ENCODE measurements at regions of chr3 and their contacts with region 1.

Region 1: GRCh38 chr3:32510075-32510724 is 7.5 kb upstream of the CMTM6 start:
- DNase-seq: peak in 4 of 5 donors; percentile 80 to 91 (median 84)
- H3K4me3 ChIP-seq: no peak overlapping the region
- H3K27ac ChIP-seq: no peak overlapping the region
- H3K4me1 ChIP-seq: no peaks in the 10 kb centered on the region
- H3K27me3 ChIP-seq: no peaks in the 10 kb centered on the region
- CTCF ChIP-seq: peak; percentile 89

Region 2: DNA sequence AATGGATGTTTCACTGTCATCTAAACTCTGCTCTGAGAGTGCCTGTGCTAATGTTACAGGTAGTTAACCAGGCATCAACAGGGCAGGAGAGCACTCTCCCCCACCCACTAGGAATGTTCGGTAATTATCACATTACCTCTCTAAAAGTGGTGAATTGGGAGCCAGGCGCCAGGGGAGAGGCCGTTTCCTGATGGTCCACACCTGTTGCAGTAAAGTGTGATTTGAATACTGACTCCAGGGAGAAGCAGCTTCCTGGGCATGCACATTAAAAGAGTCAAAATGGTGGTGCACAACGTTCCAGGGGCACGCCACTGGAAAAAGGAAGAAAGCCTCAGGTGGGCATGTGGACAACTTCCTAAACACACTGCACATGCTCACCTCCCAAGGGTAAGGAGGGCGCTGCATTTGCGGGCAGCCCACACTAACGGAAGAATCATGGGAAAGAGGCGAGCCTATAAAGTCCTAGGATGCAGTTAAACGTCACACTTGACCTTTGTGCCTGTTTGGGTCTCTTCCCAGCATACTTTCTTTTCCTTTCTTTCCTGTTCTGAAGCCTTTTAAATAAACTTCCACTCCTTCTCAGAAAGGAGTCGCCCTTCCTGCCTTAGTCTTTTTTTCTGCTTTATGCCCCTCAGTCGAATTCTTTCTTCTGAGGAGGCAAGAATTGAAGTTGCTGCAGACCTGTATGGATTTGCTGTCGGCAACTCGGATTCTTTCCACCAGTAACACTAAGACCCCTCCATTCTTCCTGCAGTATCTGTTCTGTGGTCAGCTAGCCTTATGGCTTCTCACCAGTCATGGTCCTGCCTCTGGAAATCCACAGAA is 432.7 kb before region 1 on chr3:
- intact Hi-C with region 1: no loop called
- DNase-seq: peak in 4 of 5 donors; percentile 53 to 74 (median 65)
- H3K4me3 ChIP-seq: peak overlapping the region; percentile 39 to 79 (median 79)
- H3K27ac ChIP-seq: peak overlapping the region; percentile 66 to 69
- H3K4me1 ChIP-seq: peaks cover 0 to 5% (median 0%) of the 10 kb centered on the region in 3 donors
- H3K27me3 ChIP-seq: no peaks in the 10 kb centered on the region
- CTCF ChIP-seq: no peak

Region 3: DNA sequence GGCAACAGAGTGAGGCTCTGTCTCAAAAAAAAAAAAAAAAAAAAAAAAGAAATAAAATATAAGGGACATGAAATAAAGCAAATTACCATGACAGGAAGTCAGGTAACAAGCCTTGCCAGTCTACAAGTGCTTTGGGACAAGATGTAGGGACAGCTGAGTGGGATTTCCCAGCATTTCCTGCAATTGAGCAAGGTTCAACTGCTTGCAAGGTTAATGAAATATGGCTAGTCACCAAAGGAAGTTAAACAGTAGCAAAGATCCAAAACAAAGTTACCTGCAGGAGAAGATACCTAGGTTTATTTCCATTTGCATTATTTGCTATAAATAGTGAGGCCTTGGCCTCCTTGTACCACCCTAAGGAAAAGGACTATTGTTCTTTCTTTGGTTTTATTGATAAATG is 152.4 kb after region 1 on chr3:
- intact Hi-C with region 1: loop called (anchors 5 kb)
- DNase-seq: peak in 1 of 5 donors; percentile 15
- H3K4me3 ChIP-seq: no peak overlapping the region
- H3K27ac ChIP-seq: no peak overlapping the region
- H3K4me1 ChIP-seq: peaks cover 0 to 3% (median 3%) of the 10 kb centered on the region in 3 donors
- H3K27me3 ChIP-seq: no peaks in the 10 kb centered on the region
- CTCF ChIP-seq: no peak

Measured in kidney (tissue), 22 donors.